Vagina (tissue), 2 donors: ENCODE measurements at regions of chr9 and their contacts with region 1.

Region 1: DNA sequence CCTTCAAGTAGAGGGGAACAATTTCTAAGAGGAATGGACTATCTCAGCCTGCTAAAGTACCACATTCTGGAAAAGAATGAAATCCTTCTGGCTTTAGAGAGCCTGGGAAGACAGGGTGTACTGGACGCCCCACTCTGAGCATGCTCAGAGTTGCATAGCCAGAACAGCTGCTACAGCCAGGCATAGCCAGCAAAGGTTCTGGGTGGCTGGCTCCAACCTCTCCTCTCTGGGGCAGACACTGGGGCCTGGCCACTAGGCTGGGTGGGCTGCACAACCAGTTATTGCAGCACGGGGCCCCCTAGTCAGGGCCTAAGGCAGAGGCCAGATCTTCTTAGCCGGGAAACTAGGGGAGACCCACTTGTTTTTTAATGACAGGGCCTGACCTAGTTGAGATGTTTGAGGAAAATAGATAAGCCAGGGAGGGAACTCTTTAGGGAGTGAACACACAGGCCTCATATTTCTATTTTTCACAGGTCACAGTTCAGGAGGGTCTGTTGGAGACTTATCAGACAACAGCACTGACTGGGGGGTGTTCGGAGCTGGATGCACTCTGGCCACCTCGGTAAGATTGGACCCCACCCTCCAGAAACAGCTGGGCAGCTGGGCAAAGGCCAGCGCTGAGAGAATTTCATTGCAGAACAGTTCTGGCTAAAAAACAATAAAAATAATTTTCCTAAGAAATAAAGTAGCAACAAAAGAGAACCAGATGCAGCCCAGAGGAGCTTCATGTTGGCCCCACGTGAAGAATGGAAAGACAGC is 142.9 kb downstream of the LPAR1 start:
- DNase-seq: no peak
- H3K4me3 ChIP-seq: no peak overlapping the region
- H3K27ac ChIP-seq: peak overlapping the region; percentile 2
- H3K4me1 ChIP-seq: peaks cover 5% of the 10 kb centered on the region
- H3K27me3 ChIP-seq: no peaks in the 10 kb centered on the region
- CTCF ChIP-seq: no peak
- POLR2A ChIP-seq: no peak

Region 2: GRCh38 chr9:110752766-110753165 is 142.6 kb before region 1 on chr9:
- intact Hi-C with region 1: loop called (anchors 10 kb)
- DNase-seq: no peak
- H3K4me3 ChIP-seq: no peak overlapping the region
- H3K27ac ChIP-seq: peak overlapping the region; percentile 49
- H3K4me1 ChIP-seq: peaks cover 11% of the 10 kb centered on the region
- H3K27me3 ChIP-seq: no peaks in the 10 kb centered on the region
- CTCF ChIP-seq: no peak
- POLR2A ChIP-seq: no peak

Region 3: GRCh38 chr9:110835404-110835803 is 59.9 kb before region 1 on chr9:
- intact Hi-C with region 1: no loop called
- DNase-seq: no peak
- H3K4me3 ChIP-seq: no peak overlapping the region
- H3K27ac ChIP-seq: no peak overlapping the region
- H3K4me1 ChIP-seq: no peaks in the 10 kb centered on the region
- H3K27me3 ChIP-seq: no peaks in the 10 kb centered on the region
- CTCF ChIP-seq: no peak
- POLR2A ChIP-seq: no peak

Region 4: DNA sequence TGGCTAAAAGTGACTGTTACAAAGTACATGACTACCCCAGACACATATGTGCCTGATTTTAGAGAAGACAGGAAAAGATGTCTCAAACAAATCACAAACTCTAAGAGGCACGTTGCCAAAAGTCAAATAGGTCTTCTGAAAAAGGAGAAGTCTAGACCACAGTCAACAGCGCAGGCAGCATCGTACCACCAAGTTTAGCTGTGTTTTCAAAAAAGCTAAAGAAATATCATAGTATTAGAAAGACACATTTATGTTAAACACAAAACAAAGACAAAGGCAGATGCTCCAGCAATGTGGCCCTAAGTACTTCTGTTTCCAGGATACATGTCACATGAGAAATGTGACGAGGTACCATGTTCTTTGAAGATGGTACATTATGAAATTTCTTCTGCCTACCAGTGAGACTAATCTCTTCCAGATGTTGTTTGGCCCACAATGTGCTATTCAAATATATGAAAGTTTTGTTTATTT is 99.5 kb after region 1 on chr9:
- intact Hi-C with region 1: no loop called
- DNase-seq: no peak
- H3K4me3 ChIP-seq: no peak overlapping the region
- H3K27ac ChIP-seq: no peak overlapping the region
- H3K4me1 ChIP-seq: peaks cover 50% of the 10 kb centered on the region
- H3K27me3 ChIP-seq: no peaks in the 10 kb centered on the region
- CTCF ChIP-seq: no peak
- POLR2A ChIP-seq: no peak